ENCODE measurements at regions of chrX and their contacts with region 1.

Region 1: DNA sequence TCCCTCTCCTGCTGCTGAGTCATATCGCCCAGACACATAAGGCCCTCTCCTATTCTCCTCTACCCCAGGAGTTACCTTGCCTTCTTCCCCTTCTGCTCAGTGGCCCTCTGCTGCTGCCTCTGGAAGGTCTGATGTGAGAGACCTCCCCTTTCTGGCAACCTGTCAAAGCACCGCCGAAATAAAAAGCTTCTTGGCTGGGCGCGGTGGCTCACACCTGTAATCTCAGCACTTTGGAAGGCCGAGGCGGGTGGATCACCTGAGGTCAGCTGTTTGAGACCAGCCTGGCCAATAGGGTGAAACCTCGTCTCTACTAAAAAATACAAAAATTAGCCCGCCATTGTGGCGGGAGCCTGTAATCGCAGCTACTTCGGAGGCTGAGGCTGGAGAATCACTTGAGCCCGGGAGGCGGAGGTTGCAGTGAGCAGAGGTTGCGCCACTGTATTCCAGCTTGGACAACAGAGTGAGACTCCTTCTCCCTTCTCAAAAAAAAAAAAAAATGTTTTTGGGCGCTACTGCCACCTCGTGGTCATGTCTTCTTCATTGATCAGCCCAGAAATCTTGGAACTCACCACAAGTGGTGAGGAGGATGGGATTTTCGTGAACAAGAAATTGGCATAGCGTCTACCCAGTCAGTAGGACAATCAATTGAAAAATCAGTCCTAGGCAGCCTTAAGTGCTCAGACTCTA is 8.6 kb upstream of the ZXDA start:
- DNase-seq: peak; percentile 26
- H3K4me3 Mint-ChIP-seq: no peak overlapping the region
- H3K27ac Mint-ChIP-seq: no peak overlapping the region
- H3K4me1 Mint-ChIP-seq: no peaks in the 10 kb centered on the region
- H3K27me3 Mint-ChIP-seq: no peaks in the 10 kb centered on the region

Region 2: DNA sequence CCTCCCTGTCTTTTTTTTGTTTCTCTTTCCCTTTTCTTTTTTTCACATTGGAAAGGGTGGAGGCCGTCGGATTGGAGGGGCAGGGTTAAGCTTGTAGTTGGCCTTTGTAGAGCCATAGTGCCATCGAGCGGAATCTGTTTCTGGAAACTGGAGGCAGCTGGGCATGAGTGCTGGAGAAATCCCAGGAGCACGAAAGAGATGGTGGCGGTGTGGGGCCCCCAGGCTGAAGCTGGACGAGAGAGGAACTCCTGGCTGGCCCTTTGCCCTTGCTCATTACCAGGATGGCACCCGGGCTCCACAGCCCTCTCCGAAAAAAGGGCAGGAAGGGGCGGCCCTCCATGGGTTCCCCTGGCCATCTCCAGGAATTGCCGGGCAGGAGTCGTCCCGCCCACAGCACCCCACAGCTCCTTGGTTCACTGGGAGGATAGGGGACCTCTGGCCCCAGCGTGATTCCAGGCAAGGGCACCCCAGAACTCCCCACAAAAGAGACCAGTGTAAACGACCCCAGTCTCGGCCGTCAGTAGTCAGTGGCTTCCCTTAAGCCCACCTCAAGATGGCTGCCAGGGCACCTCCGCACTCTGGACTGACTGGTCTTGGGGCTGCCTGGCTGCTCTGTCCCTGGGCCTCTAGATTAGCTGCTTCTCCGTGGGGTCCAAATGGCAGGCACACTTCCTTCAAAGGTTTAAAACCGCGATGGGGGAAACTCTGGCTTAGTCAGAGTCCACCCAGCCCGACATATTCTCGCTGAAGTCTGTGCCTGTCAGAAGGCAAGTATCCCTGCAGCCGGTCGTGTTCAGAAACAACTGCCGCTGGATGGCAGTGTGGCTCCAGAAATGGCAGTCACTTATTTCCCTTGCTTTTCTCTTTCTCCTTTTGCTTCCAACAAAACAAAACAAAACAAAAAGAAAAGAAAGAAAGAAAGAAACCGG is 1115.7 kb before region 1 on chrX:
- CTCF ChIA-PET with region 1: no interaction called
- intact Hi-C with region 1: loop called (anchors 10 kb)
- DNase-seq: peak; percentile 71
- H3K4me3 Mint-ChIP-seq: peak overlapping the region; percentile 32
- H3K27ac Mint-ChIP-seq: no peak overlapping the region
- H3K4me1 Mint-ChIP-seq: peaks cover 45% of the 10 kb centered on the region
- H3K27me3 Mint-ChIP-seq: no peaks in the 10 kb centered on the region

Region 3: DNA sequence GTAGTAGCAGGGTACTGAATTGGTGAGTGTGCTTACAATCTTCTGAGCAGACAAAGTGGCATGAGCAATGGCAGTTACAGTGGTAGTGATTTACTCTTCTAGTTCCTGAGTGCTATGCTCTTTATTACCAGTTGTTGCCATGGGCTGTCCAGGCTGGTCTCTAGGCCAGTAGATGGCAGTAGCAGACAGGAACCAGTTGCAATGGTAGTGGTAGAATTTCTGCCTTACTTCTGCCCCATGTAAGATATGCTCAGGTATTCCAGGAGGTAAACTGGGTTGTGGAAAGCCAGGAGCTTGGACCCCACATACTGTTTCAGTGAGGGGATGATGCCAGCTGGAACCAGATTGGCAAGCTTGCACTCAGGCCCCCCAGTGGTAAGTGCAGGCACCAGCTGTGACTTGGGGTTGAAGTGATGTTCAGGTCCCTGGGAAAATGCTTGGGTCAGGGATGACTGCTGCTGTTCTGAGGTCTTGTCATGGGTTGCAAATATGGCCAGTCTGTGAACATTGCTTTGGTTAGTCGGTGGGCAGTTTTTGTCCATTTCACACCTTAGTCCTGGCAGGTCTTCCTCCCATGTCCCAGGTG is 390.1 kb before region 1 on chrX:
- CTCF ChIA-PET with region 1: no interaction called
- intact Hi-C with region 1: loop called (anchors 2 kb)
- DNase-seq: peak; percentile 36
- H3K4me3 Mint-ChIP-seq: no peak overlapping the region
- H3K27ac Mint-ChIP-seq: no peak overlapping the region
- H3K4me1 Mint-ChIP-seq: peaks cover 1% of the 10 kb centered on the region
- H3K27me3 Mint-ChIP-seq: no peaks in the 10 kb centered on the region

Region 4: GRCh38 chrX:57573754-57574153 is 345.1 kb before region 1 on chrX:
- CTCF ChIA-PET with region 1: no interaction called
- intact Hi-C with region 1: loop called (anchors 1 kb)
- DNase-seq: peak; percentile 39
- H3K4me3 Mint-ChIP-seq: no peak overlapping the region
- H3K27ac Mint-ChIP-seq: no peak overlapping the region
- H3K4me1 Mint-ChIP-seq: no peaks in the 10 kb centered on the region
- H3K27me3 Mint-ChIP-seq: no peaks in the 10 kb centered on the region

Region 5: GRCh38 chrX:57595381-57595811 is 323.5 kb before region 1 on chrX:
- CTCF ChIA-PET with region 1: no interaction called
- intact Hi-C with region 1: loop called (anchors 5 kb)
- DNase-seq: no peak
- H3K4me3 Mint-ChIP-seq: peak overlapping the region; percentile 46
- H3K27ac Mint-ChIP-seq: peak overlapping the region; percentile 71
- H3K4me1 Mint-ChIP-seq: peaks cover 24% of the 10 kb centered on the region
- H3K27me3 Mint-ChIP-seq: no peaks in the 10 kb centered on the region

Region 6: GRCh38 chrX:57643698-57644097 is 275.2 kb before region 1 on chrX:
- CTCF ChIA-PET with region 1: no interaction called
- intact Hi-C with region 1: no loop called
- DNase-seq: no peak
- H3K4me3 Mint-ChIP-seq: no peak overlapping the region
- H3K27ac Mint-ChIP-seq: no peak overlapping the region
- H3K4me1 Mint-ChIP-seq: no peaks in the 10 kb centered on the region
- H3K27me3 Mint-ChIP-seq: no peaks in the 10 kb centered on the region

Region 7: DNA sequence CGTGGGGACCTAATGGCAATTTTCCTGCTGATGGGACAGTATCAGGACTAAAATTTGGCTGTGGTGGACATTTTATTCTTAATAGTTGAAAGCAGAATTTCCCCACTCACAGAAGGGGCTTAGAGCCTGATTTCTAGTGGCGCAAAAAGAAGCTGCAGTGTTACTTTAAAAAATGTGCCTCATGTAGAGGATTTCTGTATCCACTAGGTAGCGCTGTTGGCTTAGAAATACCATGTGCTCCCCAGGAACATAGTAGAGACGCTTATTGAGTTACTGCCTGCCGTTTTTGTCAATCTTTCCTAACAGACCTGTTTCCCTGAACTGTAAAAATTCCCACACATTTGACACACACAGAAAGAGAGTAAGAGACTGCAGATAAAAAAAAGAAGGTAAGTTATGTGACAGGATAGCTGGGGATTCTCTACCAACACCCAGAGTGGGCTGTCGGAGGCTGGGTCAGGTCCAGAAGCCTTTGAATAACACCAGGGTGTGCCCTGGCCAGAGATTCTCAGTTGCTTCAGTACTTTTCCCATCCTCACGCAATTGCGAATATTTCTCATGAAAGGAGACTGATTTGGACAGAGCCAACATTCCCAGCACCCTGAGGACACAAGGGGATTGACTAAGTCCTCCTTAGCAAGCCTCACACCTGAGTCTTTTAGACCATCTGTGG is 97.1 kb before region 1 on chrX:
- CTCF ChIA-PET with region 1: no interaction called
- intact Hi-C with region 1: loop called (anchors 1 kb)
- DNase-seq: peak; percentile 43
- H3K4me3 Mint-ChIP-seq: no peak overlapping the region
- H3K27ac Mint-ChIP-seq: no peak overlapping the region
- H3K4me1 Mint-ChIP-seq: no peaks in the 10 kb centered on the region
- H3K27me3 Mint-ChIP-seq: no peaks in the 10 kb centered on the region